ENCODE measurements at regions of chr13 and their contacts with region 1.

Region 1: GRCh38 chr13:40190641-40191100 is 475.8 kb downstream of the FOXO1 start:
- DNase-seq: peak; percentile 44 to 92 (median 74)
- ATAC-seq: peak; percentile 45
- H3K4me3 ChIP-seq: no peak overlapping the region
- H3K4me3 Mint-ChIP-seq: peak overlapping the region; percentile 80
- H3K27ac ChIP-seq: peak overlapping the region; percentile 60 to 71
- H3K27ac Mint-ChIP-seq: peak overlapping the region; percentile 99
- H3K4me1 ChIP-seq: peaks cover 65% of the 10 kb centered on the region
- H3K4me1 Mint-ChIP-seq: peaks cover 90% of the 10 kb centered on the region
- H3K27me3 ChIP-seq: no peaks in the 10 kb centered on the region
- H3K27me3 Mint-ChIP-seq: no peaks in the 10 kb centered on the region
- CTCF ChIP-seq: no peak

Region 2: DNA sequence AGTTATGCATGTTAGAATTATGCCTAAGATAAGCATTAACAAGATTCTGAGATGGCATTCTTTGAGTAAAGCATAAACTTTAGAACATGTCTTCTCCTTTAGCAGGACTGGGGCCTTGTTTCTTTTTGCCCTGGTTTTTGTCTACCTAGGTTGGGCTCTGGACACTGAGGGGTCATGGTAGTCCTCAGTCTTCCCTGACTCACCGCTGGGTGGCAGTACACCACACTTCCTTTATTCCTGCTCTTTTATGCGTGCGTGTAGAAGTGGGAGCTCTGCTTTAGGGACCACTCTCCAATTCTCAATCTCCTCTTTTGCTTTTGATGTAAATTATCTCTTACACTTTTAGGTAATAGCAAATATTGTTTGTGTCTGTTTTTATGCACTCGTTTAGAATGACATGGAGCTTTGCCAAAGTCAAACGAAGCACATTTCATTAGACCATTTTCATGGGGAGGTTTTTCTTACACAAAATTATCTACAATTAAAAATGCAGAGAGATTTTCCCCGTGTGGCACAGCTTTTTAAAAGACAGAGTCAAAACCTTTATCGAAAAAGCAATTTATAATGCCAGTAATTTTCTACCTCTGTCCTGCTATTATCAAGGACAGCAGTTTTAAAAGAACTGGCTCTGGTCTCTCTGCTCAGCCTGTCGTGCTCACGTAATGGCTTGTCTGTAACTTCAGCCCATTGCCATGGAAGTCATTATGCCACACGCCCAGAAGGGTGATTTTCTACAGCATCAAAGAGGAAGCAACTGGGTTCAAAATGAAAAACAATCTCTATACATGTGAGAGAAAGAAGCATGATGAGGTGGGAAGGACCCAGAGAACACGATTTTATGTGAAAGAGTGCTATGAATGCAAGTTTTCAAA is 121.3 kb before region 1 on chr13:
- CTCF ChIA-PET with region 1: interaction called, 8 read pairs
- POLR2A ChIA-PET with region 1: interaction called, 15 read pairs
- intact Hi-C with region 1: loop called (anchors 1 to 5 kb)
- DNase-seq: peak; percentile 54 to 86 (median 67)
- ATAC-seq: peak; percentile 92
- H3K4me3 ChIP-seq: no peak overlapping the region
- H3K4me3 Mint-ChIP-seq: peak overlapping the region; percentile 46
- H3K27ac ChIP-seq: no peak overlapping the region
- H3K27ac Mint-ChIP-seq: peak overlapping the region; percentile 8
- H3K4me1 ChIP-seq: peaks cover 15% of the 10 kb centered on the region
- H3K4me1 Mint-ChIP-seq: peaks cover 38% of the 10 kb centered on the region
- H3K27me3 ChIP-seq: no peaks in the 10 kb centered on the region
- H3K27me3 Mint-ChIP-seq: no peaks in the 10 kb centered on the region
- CTCF ChIP-seq: peak; percentile 91

Region 3: GRCh38 chr13:40170982-40171381 is 19.7 kb before region 1 on chr13:
- CTCF ChIA-PET with region 1: interaction called, 4 read pairs
- POLR2A ChIA-PET with region 1: interaction called, 12 read pairs
- intact Hi-C with region 1: loop called in 1 of 2 experiments (anchors 2 kb)
- DNase-seq: peak in 1 of 14 experiments; percentile 26
- ATAC-seq: no peak
- H3K4me3 ChIP-seq: no peak overlapping the region
- H3K4me3 Mint-ChIP-seq: no peak overlapping the region
- H3K27ac ChIP-seq: no peak overlapping the region
- H3K27ac Mint-ChIP-seq: no peak overlapping the region
- H3K4me1 ChIP-seq: peaks cover 14% of the 10 kb centered on the region
- H3K4me1 Mint-ChIP-seq: peaks cover 58% of the 10 kb centered on the region
- H3K27me3 ChIP-seq: no peaks in the 10 kb centered on the region
- H3K27me3 Mint-ChIP-seq: no peaks in the 10 kb centered on the region
- CTCF ChIP-seq: no peak

Region 4: GRCh38 chr13:40206241-40207000 is 15.8 kb after region 1 on chr13:
- CTCF ChIA-PET with region 1: interaction called, 7 read pairs
- POLR2A ChIA-PET with region 1: interaction called, 125 read pairs
- intact Hi-C with region 1: loop called (anchors 1 to 2 kb)
- DNase-seq: peak in 12 of 14 experiments; percentile 35 to 80 (median 54)
- ATAC-seq: peak; percentile 92
- H3K4me3 ChIP-seq: peak overlapping the region; percentile 10
- H3K4me3 Mint-ChIP-seq: peak overlapping the region; percentile 79
- H3K27ac ChIP-seq: peak overlapping the region; percentile 68 to 77
- H3K27ac Mint-ChIP-seq: peak overlapping the region; percentile 97
- H3K4me1 ChIP-seq: peaks cover 56% of the 10 kb centered on the region
- H3K4me1 Mint-ChIP-seq: peaks cover 80% of the 10 kb centered on the region
- H3K27me3 ChIP-seq: no peaks in the 10 kb centered on the region
- H3K27me3 Mint-ChIP-seq: no peaks in the 10 kb centered on the region
- CTCF ChIP-seq: no peak

Region 5: GRCh38 chr13:40388617-40389016 is 197.9 kb after region 1 on chr13:
- CTCF ChIA-PET with region 1: no interaction called
- POLR2A ChIA-PET with region 1: interaction called, 17 read pairs
- intact Hi-C with region 1: loop called in 1 of 2 experiments (anchors 1 kb)
- DNase-seq: peak; percentile 66 to 96 (median 78)
- ATAC-seq: peak; percentile 89
- H3K4me3 ChIP-seq: peak overlapping the region; percentile 57
- H3K4me3 Mint-ChIP-seq: peak overlapping the region; percentile 82
- H3K27ac ChIP-seq: peak overlapping the region; percentile 77 to 96
- H3K27ac Mint-ChIP-seq: peak overlapping the region; percentile 95
- H3K4me1 ChIP-seq: peaks cover 35% of the 10 kb centered on the region
- H3K4me1 Mint-ChIP-seq: peaks cover 54% of the 10 kb centered on the region
- H3K27me3 ChIP-seq: no peaks in the 10 kb centered on the region
- H3K27me3 Mint-ChIP-seq: no peaks in the 10 kb centered on the region
- CTCF ChIP-seq: no peak

Measured in CD4-positive, alpha-beta T cell (primary cell).